ENCODE measurements at regions of chr14 and their contacts with region 1.

Region 1: DNA sequence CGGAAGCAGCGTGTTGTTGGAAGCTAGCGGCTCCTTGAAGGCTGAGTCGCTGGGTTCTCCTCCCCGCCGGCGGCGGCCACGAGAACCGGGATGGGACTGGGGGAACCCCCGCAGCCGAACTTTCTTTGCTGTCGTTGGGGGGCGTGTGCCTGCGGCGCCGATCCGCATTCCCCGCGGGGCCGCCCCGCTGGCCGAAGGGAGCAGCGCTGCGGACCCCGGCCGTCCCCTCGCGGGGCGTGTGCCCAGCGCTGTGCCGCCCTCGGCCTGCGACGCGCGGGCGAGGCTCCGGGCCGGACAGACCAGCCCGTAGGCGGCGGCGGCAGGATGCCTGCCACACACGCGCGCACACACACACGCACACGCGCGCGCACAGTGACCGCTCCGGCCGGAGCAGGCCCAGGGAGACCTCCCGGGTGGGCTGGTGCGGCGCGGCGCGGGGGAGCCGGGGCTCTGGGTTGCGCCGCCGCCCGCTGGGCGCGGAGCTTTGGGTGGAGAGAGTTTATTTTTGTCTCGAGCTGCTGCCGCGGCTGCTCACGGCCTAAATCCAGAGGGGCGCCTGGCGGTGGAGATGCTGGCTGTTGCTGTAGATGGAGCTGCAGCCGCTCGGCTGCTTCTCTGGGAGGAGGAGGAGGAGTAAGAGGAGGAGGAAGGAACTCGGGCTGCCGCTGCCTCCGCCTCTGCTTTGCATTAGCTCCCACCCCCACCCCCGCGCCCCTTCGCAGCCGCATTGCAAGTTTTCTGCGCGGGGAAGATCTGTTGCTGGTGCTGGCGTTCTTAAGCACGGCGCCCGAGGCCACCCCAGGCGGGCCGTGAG is at the start of gene SAMD4A:
- DNase-seq: peak; percentile 95
- ATAC-seq: peak; percentile 33
- H3K4me3 ChIP-seq: peak within 1 kb of the TSS; percentile 85
- H3K27ac ChIP-seq: peak within 1 kb of the TSS; percentile 79
- H3K4me1 ChIP-seq: peaks cover 42% of the 10 kb centered on the region
- H3K27me3 ChIP-seq: no peaks in the 10 kb centered on the region
- CTCF ChIP-seq: peak; percentile 53; the same call in 1 of the 2 replicates
- total RNA-seq, gene SAMD4A: 42.9 and 45.2 TPM in 2 replicates

Region 2: GRCh38 chr14:54446161-54446693 is 120.4 kb before region 1 on chr14:
- CTCF ChIA-PET with region 1: no interaction called
- POLR2A ChIA-PET with region 1: interaction called, 18 read pairs
- intact Hi-C with region 1: no loop called
- DNase-seq: peak; percentile 71
- ATAC-seq: no peak
- H3K4me3 ChIP-seq: no peak overlapping the region
- H3K27ac ChIP-seq: peak overlapping the region; percentile 61; the same call in 1 of the 2 replicates
- H3K4me1 ChIP-seq: peaks cover 27% of the 10 kb centered on the region
- H3K27me3 ChIP-seq: no peaks in the 10 kb centered on the region
- CTCF ChIP-seq: no peak

Region 3: DNA sequence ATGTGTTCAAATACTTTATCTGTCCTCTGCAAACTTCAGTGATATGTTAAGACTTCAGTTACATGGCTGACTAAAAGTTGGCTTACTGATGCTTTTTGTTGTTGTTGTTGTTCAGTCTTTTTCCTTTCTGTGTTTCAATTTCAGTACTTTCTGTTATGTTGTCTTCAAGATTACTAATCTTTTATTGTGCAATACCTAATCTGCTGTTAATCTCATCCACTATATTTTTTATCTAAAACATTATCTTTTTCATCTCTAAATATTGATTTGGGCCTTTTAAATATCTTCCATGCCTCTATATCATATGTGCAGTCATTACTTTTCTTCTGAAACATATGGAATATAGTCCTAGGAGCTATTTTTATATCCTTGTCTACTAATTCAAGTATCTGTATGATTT is 49.9 kb before region 1 on chr14:
- CTCF ChIA-PET with region 1: no interaction called
- POLR2A ChIA-PET with region 1: no interaction called
- intact Hi-C with region 1: no loop called
- DNase-seq: no peak
- ATAC-seq: no peak
- H3K4me3 ChIP-seq: no peak overlapping the region
- H3K27ac ChIP-seq: no peak overlapping the region
- H3K4me1 ChIP-seq: no peaks in the 10 kb centered on the region
- H3K27me3 ChIP-seq: no peaks in the 10 kb centered on the region
- CTCF ChIP-seq: no peak

Region 4: GRCh38 chr14:54606178-54606577 is 39.6 kb after region 1 on chr14:
- CTCF ChIA-PET with region 1: interaction called, 3 read pairs
- POLR2A ChIA-PET with region 1: interaction called, 4 read pairs
- intact Hi-C with region 1: loop called (anchors 5 kb)
- DNase-seq: no peak
- ATAC-seq: no peak
- H3K4me3 ChIP-seq: no peak overlapping the region
- H3K27ac ChIP-seq: no peak overlapping the region
- H3K4me1 ChIP-seq: peaks cover 34% of the 10 kb centered on the region
- H3K27me3 ChIP-seq: no peaks in the 10 kb centered on the region
- CTCF ChIP-seq: no peak

Region 5: GRCh38 chr14:54658836-54659764 is 92.5 kb after region 1 on chr14:
- CTCF ChIA-PET with region 1: interaction called, 7 read pairs
- POLR2A ChIA-PET with region 1: interaction called, 6 read pairs
- intact Hi-C with region 1: loop called (anchors 1 kb)
- DNase-seq: peak; percentile 100
- ATAC-seq: peak; percentile 93
- H3K4me3 ChIP-seq: peak overlapping the region; percentile 5; the same call in 1 of the 2 replicates
- H3K27ac ChIP-seq: peak overlapping the region; percentile 87
- H3K4me1 ChIP-seq: peaks cover 41% of the 10 kb centered on the region
- H3K27me3 ChIP-seq: no peaks in the 10 kb centered on the region
- CTCF ChIP-seq: no peak

Region 6: DNA sequence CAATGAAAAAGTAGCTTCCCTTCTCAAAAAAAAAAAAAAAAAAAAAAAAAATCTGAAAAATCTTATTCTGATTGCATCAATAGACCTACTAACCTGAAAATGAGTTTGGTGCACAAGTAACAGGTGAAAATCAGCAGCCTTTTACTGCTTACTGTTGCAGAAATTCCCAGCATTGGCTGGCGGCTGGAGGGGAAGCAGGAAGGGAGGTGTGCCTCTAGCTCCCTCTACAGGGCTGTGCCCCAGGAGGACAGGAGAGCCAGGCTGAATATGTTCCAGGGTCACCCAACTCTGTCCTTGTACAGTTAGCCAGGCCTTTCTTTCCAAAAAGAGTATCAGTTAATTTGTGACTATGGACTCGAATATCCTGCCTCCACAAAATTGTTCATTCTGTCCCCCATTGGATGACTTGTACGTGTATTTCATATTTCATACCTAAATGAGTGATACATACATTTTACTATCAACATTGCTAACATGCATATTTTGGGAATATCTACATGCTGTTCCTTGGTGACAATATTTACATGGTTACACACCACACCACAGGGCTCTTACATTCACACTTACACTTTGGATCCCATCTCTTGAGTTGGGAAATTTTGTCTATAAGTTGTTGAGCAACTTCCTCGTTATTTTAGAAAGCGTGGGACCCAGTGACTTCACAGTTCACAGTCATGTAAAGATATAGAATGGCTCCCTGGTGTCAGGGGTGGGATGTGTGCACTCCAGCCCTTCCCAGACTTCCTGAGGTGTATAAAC is 125.1 kb after region 1 on chr14:
- CTCF ChIA-PET with region 1: interaction called, 43 read pairs
- POLR2A ChIA-PET with region 1: interaction called, 18 read pairs
- intact Hi-C with region 1: loop called (anchors 1 kb)
- DNase-seq: peak; percentile 97
- ATAC-seq: peak; percentile 98
- H3K4me3 ChIP-seq: no peak overlapping the region
- H3K27ac ChIP-seq: peak overlapping the region; percentile 3; the same call in 1 of the 2 replicates
- H3K4me1 ChIP-seq: peaks cover 5% of the 10 kb centered on the region
- H3K27me3 ChIP-seq: no peaks in the 10 kb centered on the region
- CTCF ChIP-seq: peak; percentile 100

Region 7: GRCh38 chr14:54794796-54795195 is 228.2 kb after region 1 on chr14:
- CTCF ChIA-PET with region 1: no interaction called
- POLR2A ChIA-PET with region 1: no interaction called
- intact Hi-C with region 1: no loop called
- DNase-seq: no peak
- ATAC-seq: no peak
- H3K4me3 ChIP-seq: no peak overlapping the region
- H3K27ac ChIP-seq: no peak overlapping the region
- H3K4me1 ChIP-seq: peaks cover 9% of the 10 kb centered on the region
- H3K27me3 ChIP-seq: no peaks in the 10 kb centered on the region
- CTCF ChIP-seq: no peak

Region 8: GRCh38 chr14:54805521-54806322 is 239.1 kb after region 1 on chr14:
- CTCF ChIA-PET with region 1: interaction called, 17 read pairs
- POLR2A ChIA-PET with region 1: no interaction called
- intact Hi-C with region 1: loop called (anchors 1 kb)
- DNase-seq: peak; percentile 99
- ATAC-seq: peak; percentile 98
- H3K4me3 ChIP-seq: peak overlapping the region; percentile 42
- H3K27ac ChIP-seq: no peak overlapping the region
- H3K4me1 ChIP-seq: peaks cover 5% of the 10 kb centered on the region
- H3K27me3 ChIP-seq: no peaks in the 10 kb centered on the region
- CTCF ChIP-seq: peak; percentile 100